ENCODE measurements at regions of chr4 and their contacts with region 1.

Region 1: GRCh38 chr4:77629885-77630284 is 24.3 kb downstream of the CXCL13 start:
- DNase-seq: peak; percentile 33
- H3K4me3 Mint-ChIP-seq: no peak overlapping the region
- H3K27ac Mint-ChIP-seq: peak overlapping the region; percentile 49
- H3K4me1 Mint-ChIP-seq: peaks cover 15% of the 10 kb centered on the region
- H3K27me3 Mint-ChIP-seq: peaks cover 1% of the 10 kb centered on the region

Region 2: DNA sequence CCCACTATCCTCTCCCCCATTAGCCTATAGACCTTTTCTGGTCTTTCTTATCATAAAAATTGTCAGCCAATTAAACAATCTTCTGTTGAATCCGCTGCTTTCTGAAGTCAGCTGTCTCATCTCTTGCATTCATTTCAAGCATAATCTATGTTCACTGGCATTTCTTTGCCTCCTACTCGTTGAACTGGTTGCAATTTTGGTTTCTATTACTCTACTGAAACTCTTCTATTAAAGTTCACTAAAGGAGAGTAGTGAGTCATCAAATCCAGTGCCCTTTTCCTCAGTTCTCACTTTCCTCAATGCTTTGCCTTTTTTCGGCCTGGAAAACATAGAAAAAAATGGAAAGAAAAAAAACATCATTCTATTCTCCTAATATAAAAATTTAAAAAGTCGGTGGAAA is 48.2 kb before region 1 on chr4:
- CTCF ChIA-PET with region 1: interaction called, 5 read pairs
- POLR2A ChIA-PET with region 1: interaction called, 5 read pairs
- intact Hi-C with region 1: loop called (anchors 1 kb)
- DNase-seq: no peak
- H3K4me3 Mint-ChIP-seq: peak overlapping the region; percentile 7
- H3K27ac Mint-ChIP-seq: peak overlapping the region; percentile 65
- H3K4me1 Mint-ChIP-seq: peaks cover 35% of the 10 kb centered on the region
- H3K27me3 Mint-ChIP-seq: peaks cover 17% of the 10 kb centered on the region

Region 3: DNA sequence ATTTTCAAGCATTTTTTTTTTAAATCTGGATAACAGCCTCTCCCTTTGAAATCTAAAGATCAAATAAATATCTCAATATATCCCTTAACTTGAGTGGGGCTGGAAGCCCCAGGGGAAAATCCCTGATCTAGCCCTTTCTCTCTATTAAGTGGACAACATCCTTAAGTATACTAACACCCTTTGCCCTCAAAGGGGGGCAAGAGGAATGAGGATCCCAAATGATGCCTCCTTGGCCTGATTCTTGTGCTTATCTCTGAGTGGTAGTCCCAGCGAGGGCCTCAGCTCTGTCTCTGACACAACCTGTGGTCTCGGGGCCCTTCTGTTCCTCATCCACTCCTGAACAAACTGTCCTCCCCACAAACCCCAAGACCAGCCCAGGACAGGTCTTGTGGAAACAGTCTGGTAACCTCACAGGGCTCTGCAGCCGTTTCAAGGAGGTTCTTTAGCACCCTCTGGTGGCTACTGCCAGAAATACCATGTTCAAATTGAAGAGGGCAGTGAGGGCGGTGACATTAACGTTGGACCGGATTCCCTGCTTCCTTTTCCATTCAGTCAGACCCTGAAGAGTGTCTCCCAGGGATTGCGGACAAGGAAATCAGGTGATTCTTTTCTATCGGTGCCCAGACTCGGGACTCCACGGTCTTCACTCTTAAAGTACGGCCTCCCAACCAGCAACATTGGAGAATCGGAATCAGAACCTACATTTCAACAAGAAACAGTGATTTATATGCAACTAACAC is 11.3 kb before region 1 on chr4:
- CTCF ChIA-PET with region 1: interaction called, 36 read pairs
- POLR2A ChIA-PET with region 1: no interaction called
- intact Hi-C with region 1: no loop called
- DNase-seq: peak; percentile 71
- H3K4me3 Mint-ChIP-seq: no peak overlapping the region
- H3K27ac Mint-ChIP-seq: no peak overlapping the region
- H3K4me1 Mint-ChIP-seq: peaks cover 5% of the 10 kb centered on the region
- H3K27me3 Mint-ChIP-seq: peaks cover 15% of the 10 kb centered on the region

Region 4: GRCh38 chr4:77665381-77666069 is 35.6 kb after region 1 on chr4:
- CTCF ChIA-PET with region 1: no interaction called
- POLR2A ChIA-PET with region 1: no interaction called
- intact Hi-C with region 1: loop called (anchors 1 kb)
- DNase-seq: peak; percentile 60
- H3K4me3 Mint-ChIP-seq: no peak overlapping the region
- H3K27ac Mint-ChIP-seq: no peak overlapping the region
- H3K4me1 Mint-ChIP-seq: peaks cover 2% of the 10 kb centered on the region
- H3K27me3 Mint-ChIP-seq: no peaks in the 10 kb centered on the region

Region 5: DNA sequence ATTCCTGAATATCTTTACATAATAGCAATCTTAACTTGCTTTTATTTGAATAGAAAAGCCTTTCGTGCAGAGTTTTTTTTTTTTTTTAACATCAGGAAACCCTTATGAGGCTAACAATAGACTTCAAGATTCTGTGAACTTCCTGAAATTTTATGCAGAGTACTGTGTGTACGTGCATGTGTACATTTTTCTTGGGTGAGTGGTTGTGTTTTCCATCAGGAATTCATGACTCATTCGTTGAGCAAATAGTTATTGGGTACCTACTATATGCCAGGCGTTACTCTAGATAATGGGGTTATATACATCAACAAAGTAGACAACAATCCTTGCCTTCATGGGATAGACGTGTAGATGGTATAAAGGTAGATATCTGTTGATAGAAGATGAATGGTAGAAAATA is 291.8 kb after region 1 on chr4:
- CTCF ChIA-PET with region 1: no interaction called
- POLR2A ChIA-PET with region 1: no interaction called
- intact Hi-C with region 1: no loop called
- DNase-seq: no peak
- H3K4me3 Mint-ChIP-seq: no peak overlapping the region
- H3K27ac Mint-ChIP-seq: no peak overlapping the region
- H3K4me1 Mint-ChIP-seq: no peaks in the 10 kb centered on the region
- H3K27me3 Mint-ChIP-seq: no peaks in the 10 kb centered on the region